Esophagus muscularis mucosa (tissue), 4 donors: ENCODE measurements at regions of chr1 and their contacts with region 1.

Region 1: GRCh38 chr1:244451951-244452795 is 464 bp upstream of the ADSS2 start:
- DNase-seq: peak; percentile 100
- H3K4me3 ChIP-seq: peak overlapping the region; percentile 74 to 99 (median 85)
- H3K27ac ChIP-seq: peak overlapping the region; percentile 96 to 97 (median 96)
- H3K4me1 ChIP-seq: peaks cover 20 to 39% (median 37%) of the 10 kb centered on the region in 4 donors
- H3K27me3 ChIP-seq: no peaks in the 10 kb centered on the region
- CTCF ChIP-seq: peak; percentile 42 to 78 (median 53)
- EP300 ChIP-seq: no peak
- POLR2A ChIP-seq: no peak

Region 2: GRCh38 chr1:243255791-243256512 is 1196.2 kb before region 1 on chr1 and contains the start of gene SDCCAG8:
- intact Hi-C with region 1: loop called (anchors 5 kb)
- DNase-seq: peak; percentile 98
- H3K4me3 ChIP-seq: peak within 1 kb of the TSS; percentile 79 to 99 (median 90)
- H3K27ac ChIP-seq: peak within 1 kb of the TSS; percentile 91 to 98 (median 97)
- H3K4me1 ChIP-seq: peaks cover 15 to 50% (median 45%) of the 10 kb centered on the region in 4 donors
- H3K27me3 ChIP-seq: no peaks in the 10 kb centered on the region
- CTCF ChIP-seq: no peak
- EP300 ChIP-seq: no peak
- POLR2A ChIP-seq: peak; percentile 71
- total RNA-seq, gene SDCCAG8: 24.5 to 52.7 (median 31.7) TPM

Region 3: DNA sequence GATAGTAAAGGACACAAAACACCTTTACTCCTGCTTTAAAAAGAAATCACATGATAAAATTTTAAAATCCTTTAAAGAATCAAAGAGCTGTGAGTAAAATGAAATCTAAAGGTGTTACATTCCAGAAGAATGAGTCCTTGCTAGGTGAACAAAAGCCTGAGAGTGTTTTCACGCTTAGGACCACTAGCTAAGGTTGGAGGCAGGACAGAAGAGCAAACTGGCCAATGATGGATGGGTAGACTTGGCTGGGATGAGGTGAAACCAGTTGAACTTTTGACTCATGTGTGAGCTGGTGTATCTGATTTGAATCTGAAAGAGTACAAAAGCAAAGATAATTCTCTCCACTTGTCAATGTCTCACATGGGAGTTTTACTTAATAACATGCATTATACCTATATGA is 44.0 kb after region 1 on chr1:
- intact Hi-C with region 1: no loop called
- DNase-seq: no peak
- H3K4me3 ChIP-seq: no peak overlapping the region
- H3K27ac ChIP-seq: no peak overlapping the region
- H3K4me1 ChIP-seq: no peaks in the 10 kb centered on the region
- H3K27me3 ChIP-seq: no peaks in the 10 kb centered on the region
- CTCF ChIP-seq: no peak
- EP300 ChIP-seq: no peak
- POLR2A ChIP-seq: no peak

Region 4: GRCh38 chr1:244652699-244653466 is 200.7 kb after region 1 on chr1 and contains the start of gene DESI2:
- intact Hi-C with region 1: loop called (anchors 5 kb)
- DNase-seq: peak; percentile 99
- H3K4me3 ChIP-seq: peak within 1 kb of the TSS; percentile 72 to 90 (median 78)
- H3K27ac ChIP-seq: peak within 1 kb of the TSS; percentile 95 to 97 (median 97)
- H3K4me1 ChIP-seq: peaks cover 34 to 49% (median 45%) of the 10 kb centered on the region in 4 donors
- H3K27me3 ChIP-seq: no peaks in the 10 kb centered on the region
- CTCF ChIP-seq: peak; percentile 52 to 57 (median 55)
- EP300 ChIP-seq: no peak
- POLR2A ChIP-seq: peak; percentile 95
- total RNA-seq, gene DESI2: 30.3 to 59.6 (median 31.4) TPM

Region 5: GRCh38 chr1:244835276-244836134 is 383.3 kb after region 1 on chr1 and contains the start of gene COX20:
- intact Hi-C with region 1: loop called (anchors 10 kb)
- DNase-seq: peak; percentile 97
- H3K4me3 ChIP-seq: peak within 1 kb of the TSS; percentile 75 to 86 (median 85)
- H3K27ac ChIP-seq: peak within 1 kb of the TSS; percentile 99 to 100 (median 100)
- H3K4me1 ChIP-seq: peaks cover 34 to 51% (median 50%) of the 10 kb centered on the region in 4 donors
- H3K27me3 ChIP-seq: no peaks in the 10 kb centered on the region
- CTCF ChIP-seq: no peak
- EP300 ChIP-seq: no peak
- POLR2A ChIP-seq: peak; percentile 23
- total RNA-seq, gene COX20: 74.8 to 125 (median 101) TPM